Gastrocnemius medialis (tissue), 4 donors: ENCODE measurements at regions of chr16 and their contacts with region 1.

Region 1: DNA sequence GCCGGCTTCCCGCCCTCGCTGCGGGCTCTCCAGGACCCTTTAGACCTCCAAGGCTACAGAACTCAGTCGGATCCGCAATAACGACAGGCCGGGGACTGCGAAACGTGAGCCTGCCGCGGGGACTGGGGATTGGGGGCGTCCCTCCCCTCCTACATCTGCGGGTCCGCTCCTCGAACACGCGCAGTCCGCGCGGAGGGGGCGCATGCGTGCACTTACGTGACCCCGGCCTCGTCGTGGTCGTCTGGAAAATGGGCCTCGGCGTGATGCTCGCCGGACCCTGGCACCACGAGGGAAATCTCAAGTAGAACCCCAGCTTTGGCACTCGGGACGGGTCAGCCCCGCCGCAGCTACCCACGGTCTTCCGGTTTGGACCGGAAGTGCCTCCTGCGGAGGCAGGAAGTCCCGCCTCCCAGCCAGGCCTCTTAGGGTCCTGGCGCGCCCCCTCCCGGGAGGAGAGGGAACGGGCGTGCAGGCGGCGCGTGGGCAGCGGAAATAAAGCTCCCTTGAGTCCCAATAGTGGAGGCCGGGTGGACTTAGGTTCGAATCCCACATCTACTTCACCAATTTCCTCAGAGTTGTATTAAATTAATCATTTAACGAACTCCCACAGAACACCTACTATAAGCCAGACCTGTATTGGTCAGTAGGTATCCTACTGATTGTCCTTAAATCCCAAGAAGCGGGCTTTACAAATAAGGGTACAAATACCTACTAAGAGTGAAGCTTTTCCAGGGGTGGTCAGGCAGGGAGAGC is at the start of gene TAF1C:
- DNase-seq: peak; percentile 74 to 92
- ATAC-seq: peak; percentile 91 to 97
- H3K4me3 ChIP-seq: peak within 1 kb of the TSS; percentile 74 to 100 (median 98)
- H3K27ac ChIP-seq: peak within 1 kb of the TSS; percentile 81 to 86 (median 82)
- H3K4me1 ChIP-seq: peaks cover 0 to 8% of the 10 kb centered on the region in 2 donors
- H3K27me3 ChIP-seq: no peaks in the 10 kb centered on the region
- CTCF ChIP-seq: peak; percentile 92 to 97 (median 96)
- POLR2A ChIP-seq: peak; percentile 10 to 34
- total RNA-seq, gene TAF1C: 6.8 to 35.5 (median 12.3) TPM

Region 2: DNA sequence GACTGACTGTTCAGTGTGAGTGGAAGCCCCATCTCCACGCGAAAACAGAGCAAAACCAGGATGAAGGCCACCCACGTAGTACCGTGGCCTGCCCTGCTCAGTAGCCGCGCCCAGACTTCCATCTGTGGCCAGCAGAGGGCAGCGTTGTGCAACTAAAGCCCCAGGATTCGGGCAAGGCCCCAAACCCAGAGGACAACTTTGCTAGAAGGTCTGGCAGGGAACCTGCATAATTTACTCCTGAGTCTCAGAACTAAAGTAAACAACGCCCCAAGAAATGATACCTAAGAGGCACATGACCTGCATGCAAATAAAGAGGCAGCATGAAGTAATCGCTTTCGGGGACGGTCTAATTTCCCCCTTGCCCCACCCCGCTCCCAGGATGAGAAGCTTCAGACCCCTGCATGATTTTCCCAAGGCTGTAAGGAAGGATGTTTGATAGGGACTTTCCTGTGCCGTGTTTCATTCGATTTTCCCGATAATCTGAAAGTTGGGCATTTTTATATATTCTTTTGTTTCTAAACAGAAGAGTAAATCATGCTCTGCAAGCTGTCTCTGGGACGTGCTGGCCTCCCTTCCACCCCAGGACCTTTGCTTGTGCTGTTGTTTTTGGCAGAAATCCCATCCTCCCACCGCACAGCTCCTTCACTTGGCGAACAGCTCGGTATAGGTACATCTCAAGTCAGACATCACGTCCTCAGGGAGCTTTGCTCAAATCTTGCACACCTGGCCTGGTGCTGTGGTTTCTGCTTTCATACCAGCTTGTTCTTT is 360.5 kb before region 1 on chr16:
- in situ Hi-C with region 1: loop called in 1 of 4 experiments (anchors 25 kb)
- intact Hi-C with region 1: loop called (anchors 2 kb)
- DNase-seq: peak; percentile 82 to 86
- ATAC-seq: peak; percentile 100
- H3K4me3 ChIP-seq: peak overlapping the region in 1 of 4 donors; percentile 35
- H3K27ac ChIP-seq: peak overlapping the region; percentile 6 to 54 (median 44)
- H3K4me1 ChIP-seq: peaks cover 0 to 5% of the 10 kb centered on the region in 2 donors
- H3K27me3 ChIP-seq: no peaks in the 10 kb centered on the region
- CTCF ChIP-seq: peak; percentile 89 to 94 (median 93)
- POLR2A ChIP-seq: no peak

Region 3: DNA sequence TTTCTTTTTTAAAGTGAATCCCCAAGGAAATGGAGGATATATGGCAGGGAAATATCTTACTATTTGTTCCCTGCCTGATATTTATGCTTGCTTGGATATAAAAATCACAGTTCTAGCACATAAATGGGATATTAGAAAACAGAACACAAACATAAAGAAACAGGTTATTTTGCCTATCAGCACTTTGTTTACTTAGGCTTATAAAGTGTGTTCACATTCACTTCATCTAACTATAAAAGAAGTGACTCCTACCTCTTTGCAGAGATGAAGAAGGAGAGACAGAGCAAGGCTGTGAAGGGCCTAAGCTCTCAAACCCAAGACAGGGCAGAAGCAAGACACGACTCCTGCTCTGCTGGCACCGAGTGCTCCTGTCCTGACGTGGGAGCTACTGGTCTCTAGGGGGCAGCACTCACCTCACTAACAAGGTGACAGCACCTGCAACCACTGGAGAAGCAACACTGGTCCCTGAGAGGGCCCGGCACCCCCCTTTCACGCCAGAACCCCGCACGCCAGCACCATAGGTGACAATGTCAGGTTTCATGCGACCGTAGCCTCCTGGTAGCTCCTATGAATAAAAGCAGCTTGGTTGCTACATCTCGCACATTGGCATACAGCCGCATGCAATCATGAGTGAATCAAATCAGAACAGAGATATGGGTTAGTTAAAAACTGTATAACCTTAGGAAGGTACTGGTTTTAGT is 102.1 kb before region 1 on chr16:
- in situ Hi-C with region 1: loop called in 2 of 4 experiments (anchors 10 to 25 kb)
- intact Hi-C with region 1: loop called (anchors 2 kb)
- DNase-seq: peak in 1 of 2 donors; percentile 69
- ATAC-seq: peak; percentile 41 to 66
- H3K4me3 ChIP-seq: no peak overlapping the region
- H3K27ac ChIP-seq: no peak overlapping the region
- H3K4me1 ChIP-seq: peaks cover 0 to 12% of the 10 kb centered on the region in 2 donors
- H3K27me3 ChIP-seq: no peaks in the 10 kb centered on the region
- CTCF ChIP-seq: peak; percentile 51 to 75 (median 57)
- POLR2A ChIP-seq: no peak

Region 4: GRCh38 chr16:84144859-84145639 is 41.8 kb before region 1 on chr16 and contains the starts of genes DNAAF1 and HSDL1:
- in situ Hi-C with region 1: no loop called
- intact Hi-C with region 1: loop called (anchors 1 kb)
- DNase-seq: peak; percentile 78 to 84
- ATAC-seq: peak; percentile 89 to 95
- H3K4me3 ChIP-seq: peak within 1 kb of the TSS; percentile 66 to 92 (median 80)
- H3K27ac ChIP-seq: peak within 1 kb of the TSS; percentile 77 to 89 (median 85)
- H3K4me1 ChIP-seq: peaks cover 8 to 21% of the 10 kb centered on the region in 2 donors
- H3K27me3 ChIP-seq: no peaks in the 10 kb centered on the region
- CTCF ChIP-seq: peak in 1 of 5 experiments; percentile 28
- POLR2A ChIP-seq: peak; percentile 76 to 83
- total RNA-seq, gene DNAAF1: not detected
- total RNA-seq, gene HSDL1: 20.2 to 26.8 (median 22.6) TPM

Region 5: GRCh38 chr16:84266451-84266850 is 79.6 kb after region 1 on chr16:
- in situ Hi-C with region 1: no loop called
- intact Hi-C with region 1: no loop called
- DNase-seq: peak; percentile 35 to 68
- ATAC-seq: peak; percentile 97
- H3K4me3 ChIP-seq: no peak overlapping the region
- H3K27ac ChIP-seq: no peak overlapping the region
- H3K4me1 ChIP-seq: no peaks in the 10 kb centered on the region
- H3K27me3 ChIP-seq: peaks cover 0 to 3% (median 0%) of the 10 kb centered on the region in 3 donors
- CTCF ChIP-seq: no peak
- POLR2A ChIP-seq: no peak

Region 6: DNA sequence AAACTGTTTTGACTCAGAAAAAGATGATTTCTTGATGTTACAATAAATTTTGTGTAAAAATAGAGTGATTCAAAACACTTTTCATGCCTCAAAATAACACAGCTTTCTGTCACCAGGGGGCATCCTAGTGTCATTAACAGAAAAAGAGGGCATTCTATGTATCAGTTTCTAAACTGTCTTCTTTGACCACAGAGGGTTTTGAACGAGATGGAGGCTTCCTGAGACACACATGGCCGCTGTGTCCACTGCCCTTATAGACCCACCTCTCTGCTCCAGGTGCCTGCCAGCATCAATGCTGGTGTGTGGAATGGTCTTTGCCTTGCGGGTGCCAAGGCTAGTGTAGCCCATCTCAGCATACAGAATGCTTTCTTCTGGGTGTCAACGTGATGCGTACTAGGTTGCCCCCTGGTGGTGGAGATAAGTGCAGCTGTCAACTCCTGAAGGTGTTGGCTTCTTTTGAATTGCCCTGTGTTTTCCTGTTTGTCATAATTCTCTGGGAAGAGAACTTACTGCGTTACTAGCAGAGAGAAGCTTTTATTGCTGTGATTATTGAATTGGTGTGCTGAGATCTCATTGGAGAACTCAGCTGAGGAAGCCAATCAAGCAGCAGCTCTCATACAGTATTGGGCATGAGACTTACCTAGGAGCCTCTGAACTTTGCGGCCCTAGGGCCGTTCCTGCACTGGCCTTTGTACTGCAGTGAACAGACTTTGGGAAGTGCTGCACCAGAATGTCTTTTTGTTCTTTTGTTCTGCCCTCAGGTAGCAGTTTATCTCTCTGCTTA is 551.6 kb after region 1 on chr16:
- in situ Hi-C with region 1: no loop called
- intact Hi-C with region 1: no loop called
- DNase-seq: peak; percentile 49 to 65
- ATAC-seq: peak; percentile 64 to 79
- H3K4me3 ChIP-seq: no peak overlapping the region
- H3K27ac ChIP-seq: no peak overlapping the region
- H3K4me1 ChIP-seq: peaks cover 24 to 46% of the 10 kb centered on the region in 2 donors
- H3K27me3 ChIP-seq: no peaks in the 10 kb centered on the region
- CTCF ChIP-seq: peak; percentile 57 to 89 (median 82)
- POLR2A ChIP-seq: no peak